Aorta (tissue), 5 donors: ENCODE measurements at regions of chr3 and their contacts with region 1.

Region 1: GRCh38 chr3:58414538-58415197 is 19.0 kb downstream of the PDHB start:
- DNase-seq: peak in 1 of 2 donors; percentile 59
- ATAC-seq: peak; percentile 81
- H3K4me3 ChIP-seq: no peak overlapping the region
- H3K27ac ChIP-seq: no peak overlapping the region
- H3K4me1 ChIP-seq: no peaks in the 10 kb centered on the region
- H3K27me3 ChIP-seq: no peaks in the 10 kb centered on the region

Region 2: DNA sequence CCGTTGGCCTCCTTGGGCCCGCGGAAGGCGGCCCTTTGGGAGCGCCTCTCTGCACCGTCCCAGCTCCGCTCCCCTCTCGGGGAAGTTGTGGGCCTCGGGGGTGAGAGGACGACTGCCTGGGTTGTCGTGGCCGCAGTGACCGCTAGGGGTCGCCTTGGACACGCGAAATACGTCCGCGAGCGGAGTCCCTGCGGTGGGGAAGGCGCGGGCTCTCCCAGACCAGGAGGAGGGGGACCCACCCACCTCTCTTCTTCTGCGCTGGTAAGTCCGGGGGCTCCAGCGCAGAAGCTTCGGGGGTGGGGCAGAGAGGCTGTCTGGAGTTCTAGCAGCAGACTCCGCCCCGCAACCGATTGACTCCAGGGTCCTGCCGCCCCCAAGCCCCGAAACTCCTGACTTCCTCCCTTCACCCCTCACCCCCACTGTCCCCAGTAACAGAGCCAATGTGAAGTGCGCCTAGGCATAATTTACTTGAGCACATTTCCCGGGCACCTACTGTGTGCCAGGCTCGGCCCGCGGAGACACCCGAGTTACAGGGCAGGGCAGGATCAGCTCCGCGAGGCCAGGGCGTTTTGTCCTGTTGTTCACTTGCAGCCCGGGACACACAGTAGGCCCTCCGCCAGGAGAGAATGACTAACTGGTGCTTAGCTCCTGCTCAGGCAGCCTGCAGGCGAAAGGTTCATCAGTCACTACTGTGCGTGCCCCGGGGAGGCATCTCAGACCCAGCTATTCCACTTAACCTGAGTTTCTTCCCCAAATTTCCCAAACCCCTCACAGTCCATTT is 236.7 kb before region 1 on chr3:
- intact Hi-C with region 1: loop called in 1 of 2 experiments (anchors 10 kb)
- DNase-seq: peak; percentile 96 to 99
- ATAC-seq: peak; percentile 92
- H3K4me3 ChIP-seq: no peak overlapping the region
- H3K27ac ChIP-seq: no peak overlapping the region
- H3K4me1 ChIP-seq: no peaks in the 10 kb centered on the region
- H3K27me3 ChIP-seq: no peaks in the 10 kb centered on the region

Region 3: GRCh38 chr3:58324391-58325390 is 90.0 kb before region 1 on chr3:
- intact Hi-C with region 1: loop called in 1 of 2 experiments (anchors 5 kb)
- DNase-seq: no peak
- ATAC-seq: no peak
- H3K4me3 ChIP-seq: no peak overlapping the region
- H3K27ac ChIP-seq: no peak overlapping the region
- H3K4me1 ChIP-seq: no peaks in the 10 kb centered on the region
- H3K27me3 ChIP-seq: no peaks in the 10 kb centered on the region

Region 4: DNA sequence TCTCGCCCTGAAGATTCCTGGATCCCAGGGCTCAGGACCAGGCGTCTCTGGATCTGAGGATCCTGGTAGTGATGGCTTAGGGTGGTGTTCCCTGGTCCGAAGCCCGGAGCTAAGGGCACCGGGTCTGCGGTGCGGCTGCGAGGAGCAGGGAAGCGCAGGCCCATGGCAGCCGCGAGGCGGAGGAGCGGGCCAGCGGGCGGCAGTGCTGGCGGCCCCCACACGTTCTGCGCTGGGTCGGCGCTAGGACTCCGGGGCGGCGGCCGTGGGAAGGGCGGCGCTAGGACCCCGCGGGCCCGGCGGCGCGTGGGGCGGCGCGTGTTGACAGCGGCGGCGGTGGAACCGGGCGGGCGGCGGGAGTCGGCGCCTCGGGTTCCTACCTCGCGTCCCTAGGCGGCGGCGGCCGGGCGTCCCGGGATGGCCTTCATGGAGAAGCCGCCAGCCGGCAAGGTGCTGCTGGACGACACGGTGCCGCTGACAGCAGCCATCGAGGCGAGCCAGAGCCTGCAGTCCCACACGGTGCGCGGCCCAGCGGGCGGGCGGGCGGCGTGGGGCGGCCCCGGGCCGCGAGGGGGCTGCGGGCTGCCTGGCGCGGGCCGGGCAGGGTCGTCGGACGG is 82.0 kb before region 1 on chr3 and contains the start of gene PXK:
- intact Hi-C with region 1: loop called (anchors 5 kb)
- DNase-seq: peak; percentile 89 to 95
- ATAC-seq: peak; percentile 95
- H3K4me3 ChIP-seq: peak within 1 kb of the TSS; percentile 78 to 96
- H3K27ac ChIP-seq: peak within 1 kb of the TSS in 1 of 2 donors; percentile 52
- H3K4me1 ChIP-seq: peaks cover 0 to 7% of the 10 kb centered on the region in 2 donors
- H3K27me3 ChIP-seq: no peaks in the 10 kb centered on the region
- total RNA-seq, gene PXK: 19.8 to 32.6 TPM